AG04450 (cell line): ENCODE measurements at regions of chr13 and their contacts with region 1.

Region 1: DNA sequence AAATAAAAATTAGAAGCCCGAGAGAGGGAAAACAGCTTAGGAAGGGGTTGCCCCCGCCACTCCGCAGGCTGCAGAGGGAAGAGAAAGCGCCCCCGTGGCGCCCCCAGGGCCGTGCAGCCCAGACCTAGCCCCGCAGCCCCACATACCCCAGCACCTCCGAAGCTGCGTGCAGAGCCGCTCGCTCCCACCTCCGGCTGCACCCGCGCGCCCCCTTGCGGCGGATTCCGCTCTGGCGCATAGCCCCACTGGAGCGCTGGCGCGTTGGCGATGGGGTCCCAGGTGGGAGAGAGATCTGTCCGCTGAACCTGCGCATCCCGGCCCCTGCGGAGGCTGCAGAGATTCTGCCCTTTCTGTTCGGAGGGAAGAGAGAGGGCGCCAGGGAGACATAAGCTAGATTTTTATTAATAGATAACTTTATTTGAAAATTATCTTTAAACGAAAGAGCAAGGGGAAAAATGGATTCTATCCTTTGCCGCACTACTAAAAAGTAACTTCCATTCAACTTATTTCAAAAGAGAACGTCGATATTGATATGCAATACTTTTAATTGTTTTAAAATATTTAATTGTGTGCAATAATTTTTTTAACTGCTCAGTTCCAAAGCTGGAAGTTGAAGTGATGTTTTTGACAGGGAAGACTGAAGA is 11.7 kb upstream of the CLN5 start:
- DNase-seq: peak; percentile 13
- H3K4me3 ChIP-seq: peak overlapping the region; percentile 54
- H3K27ac ChIP-seq: no peak overlapping the region
- H3K27me3 ChIP-seq: peaks cover 22% of the 10 kb centered on the region
- CTCF ChIP-seq: peak; percentile 97

Region 2: DNA sequence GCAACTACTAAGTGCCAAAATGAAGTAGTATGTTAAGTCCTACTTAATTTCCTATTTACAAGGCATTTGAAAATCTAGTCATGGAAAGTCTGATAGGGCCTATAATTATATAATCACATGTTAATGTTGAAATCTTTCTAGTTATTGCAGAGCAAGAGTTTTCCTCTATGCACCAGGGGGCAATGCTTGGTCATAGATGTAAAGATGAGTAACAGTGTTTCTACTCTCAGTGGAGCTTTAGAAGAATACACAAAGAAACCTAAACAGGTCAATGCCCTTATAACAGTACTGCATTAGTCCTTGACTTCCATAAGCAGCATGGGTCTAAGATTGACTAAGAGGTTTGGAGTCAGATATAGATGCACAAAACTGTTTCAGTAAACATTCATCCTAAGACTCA is 312.6 kb before region 1 on chr13:
- CTCF ChIA-PET with region 1: interaction called, 17 read pairs
- POLR2A ChIA-PET with region 1: no interaction called
- DNase-seq: peak; percentile 29
- H3K4me3 ChIP-seq: no peak overlapping the region
- H3K27ac ChIP-seq: no peak overlapping the region
- H3K27me3 ChIP-seq: peaks cover 3% of the 10 kb centered on the region
- CTCF ChIP-seq: peak; percentile 63

Region 3: GRCh38 chr13:76944456-76944855 is 35.7 kb before region 1 on chr13:
- CTCF ChIA-PET with region 1: interaction called, 14 read pairs
- POLR2A ChIA-PET with region 1: no interaction called
- DNase-seq: peak; percentile 7
- H3K4me3 ChIP-seq: no peak overlapping the region
- H3K27ac ChIP-seq: no peak overlapping the region
- H3K27me3 ChIP-seq: no peaks in the 10 kb centered on the region
- CTCF ChIP-seq: no peak

Region 4: GRCh38 chr13:76991796-76992547 is 11.8 kb after region 1 on chr13 and contains the start of gene CLN5:
- CTCF ChIA-PET with region 1: interaction called, 70 read pairs
- POLR2A ChIA-PET with region 1: no interaction called
- DNase-seq: peak; percentile 67
- H3K4me3 ChIP-seq: peak within 1 kb of the TSS; percentile 95
- H3K27ac ChIP-seq: peak within 1 kb of the TSS; percentile 61
- H3K27me3 ChIP-seq: no peaks in the 10 kb centered on the region
- CTCF ChIP-seq: peak; percentile 2; the same call in 1 of the 2 replicates
- polyA plus RNA-seq, gene CLN5: 28.7 and 38.6 TPM in 2 replicates

Region 5: DNA sequence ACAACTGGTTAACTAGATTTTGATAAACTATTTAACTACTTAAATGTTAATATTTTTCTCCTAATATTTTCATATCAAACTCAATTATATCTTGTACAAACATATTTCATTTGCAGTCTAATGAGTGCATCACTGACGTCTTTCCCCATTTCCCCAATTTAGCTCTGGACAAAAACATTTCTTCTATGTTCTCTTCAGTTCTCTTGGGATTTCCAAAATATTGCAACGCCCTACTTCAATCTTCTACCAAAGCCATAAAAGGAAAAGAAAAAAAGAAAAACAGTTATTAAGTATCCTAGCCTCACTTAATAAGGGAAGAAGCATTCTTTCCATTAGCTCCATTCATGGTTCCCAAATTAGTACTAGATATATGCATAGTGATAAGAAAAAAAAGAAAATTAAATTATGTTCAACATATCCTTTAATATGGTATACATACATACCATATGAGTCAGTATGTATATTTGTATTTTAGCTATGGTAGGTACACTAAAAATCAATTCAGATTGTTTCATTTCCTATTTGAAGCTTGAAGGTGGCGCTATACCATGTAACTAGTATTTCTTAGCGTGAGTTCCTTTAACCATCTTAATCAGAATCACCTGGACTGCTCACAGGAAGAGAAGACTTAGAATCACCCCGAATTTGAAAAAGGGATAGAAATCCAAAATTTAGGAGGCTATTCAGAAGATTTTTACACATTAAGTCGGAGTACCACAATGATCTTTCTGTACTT is 36.9 kb after region 1 on chr13:
- CTCF ChIA-PET with region 1: interaction called, 10 read pairs
- POLR2A ChIA-PET with region 1: no interaction called
- DNase-seq: no peak
- H3K4me3 ChIP-seq: no peak overlapping the region
- H3K27ac ChIP-seq: no peak overlapping the region
- H3K27me3 ChIP-seq: no peaks in the 10 kb centered on the region
- CTCF ChIP-seq: no peak

Region 6: GRCh38 chr13:77353995-77354394 is 373.8 kb after region 1 on chr13:
- CTCF ChIA-PET with region 1: no interaction called
- POLR2A ChIA-PET with region 1: no interaction called
- DNase-seq: no peak
- H3K4me3 ChIP-seq: no peak overlapping the region
- H3K27ac ChIP-seq: no peak overlapping the region
- H3K27me3 ChIP-seq: peaks cover 5% of the 10 kb centered on the region
- CTCF ChIP-seq: no peak